Activated CD4-positive, alpha-beta T cell treated with anti-CD3 and anti-CD28 coated beads, Interleukin-2, amount 10 ng/mL, durations not matched to agents 7 days and 5 days (primary cell): ENCODE measurements at regions of chr3 and their contacts with region 1.

Region 1: GRCh38 chr3:113514265-113514769 is 639 bp downstream of the SPICE1 start:
- DNase-seq: no peak
- H3K4me3 Mint-ChIP-seq: no peak overlapping the region
- H3K27ac Mint-ChIP-seq: no peak overlapping the region
- H3K4me1 Mint-ChIP-seq: peaks cover 18% of the 10 kb centered on the region
- H3K27me3 Mint-ChIP-seq: peaks cover 18% of the 10 kb centered on the region

Region 2: DNA sequence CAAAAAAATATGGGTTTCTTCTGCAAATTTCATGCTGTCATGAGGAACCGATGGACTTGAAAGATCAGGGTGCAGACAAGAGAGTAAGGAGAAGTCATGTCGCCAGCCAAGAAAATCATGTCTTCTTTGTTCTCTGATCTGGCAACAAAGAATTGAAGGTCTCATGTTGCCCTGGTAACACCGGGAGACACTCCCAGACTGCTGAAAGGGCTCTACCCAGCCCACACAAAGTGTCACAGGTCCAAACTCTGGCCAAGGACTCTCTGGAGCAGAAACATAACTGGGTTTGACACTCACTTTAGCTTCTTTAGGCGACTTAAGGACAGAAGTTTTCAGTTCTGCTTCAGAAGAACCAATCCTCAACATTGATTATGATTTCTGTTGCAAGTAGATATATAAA is 60.9 kb after region 1 on chr3:
- CTCF ChIA-PET with region 1: interaction called, 15 read pairs
- POLR2A ChIA-PET with region 1: no interaction called
- DNase-seq: no peak
- H3K4me3 Mint-ChIP-seq: no peak overlapping the region
- H3K27ac Mint-ChIP-seq: peak overlapping the region; percentile 26
- H3K4me1 Mint-ChIP-seq: peaks cover 8% of the 10 kb centered on the region
- H3K27me3 Mint-ChIP-seq: no peaks in the 10 kb centered on the region